GM10248 (cell line): ENCODE measurements at regions of chr18 and their contacts with region 1.

Region 1: DNA sequence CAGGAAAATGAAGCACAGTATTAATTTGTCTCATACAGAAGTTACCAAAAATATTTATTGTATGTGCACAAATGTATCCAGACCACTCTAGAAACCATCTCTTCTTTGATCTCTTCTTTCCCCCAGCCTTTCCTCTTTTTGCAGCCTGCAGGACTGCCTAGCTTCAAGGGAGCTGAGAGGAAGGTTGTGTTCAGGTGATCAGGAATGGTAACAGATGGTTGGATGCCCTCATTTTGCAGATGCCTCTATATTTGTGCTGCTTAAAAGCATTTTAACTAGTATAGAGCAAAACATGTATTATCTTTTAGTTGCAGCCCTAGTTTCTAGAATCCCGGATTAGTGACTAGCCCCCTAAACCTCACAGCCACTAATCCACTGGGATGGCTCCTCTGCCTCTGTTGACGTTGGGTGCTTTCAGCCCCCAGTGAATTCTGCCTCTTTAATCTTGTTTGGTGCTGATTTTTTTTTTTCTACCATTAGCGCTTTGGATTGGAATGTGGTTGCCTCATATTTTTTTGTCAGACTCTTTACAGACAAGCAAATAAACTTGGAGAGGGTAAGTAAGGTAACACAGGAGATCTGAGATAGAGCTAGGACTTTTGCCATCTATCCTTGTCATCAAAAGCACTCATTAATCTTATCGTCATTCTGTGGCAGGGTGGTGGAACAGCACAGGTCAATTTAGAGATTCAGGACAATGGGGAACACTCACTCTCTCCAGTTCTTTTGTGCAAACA is 103.8 kb upstream of the NDUFV2 start:
- DNase-seq: no peak
- CTCF ChIP-seq: no peak

Region 2: GRCh38 chr18:8988261-8988871 is 10.3 kb before region 1 on chr18:
- CTCF ChIA-PET with region 1: interaction called, 21 read pairs
- POLR2A ChIA-PET with region 1: no interaction called
- DNase-seq: peak; percentile 74
- CTCF ChIP-seq: peak; percentile 80